ENCODE measurements at regions of chr11 and their contacts with region 1.

Region 1: GRCh38 chr11:62694455-62695167 is 5.3 kb upstream of the LRRN4CL start:
- DNase-seq: peak; percentile 82 to 88 (median 84)
- ATAC-seq: peak; percentile 82
- H3K4me3 ChIP-seq: no peak overlapping the region
- H3K27ac ChIP-seq: no peak overlapping the region
- H3K4me1 ChIP-seq: no peaks in the 10 kb centered on the region
- H3K27me3 ChIP-seq: no peaks in the 10 kb centered on the region
- CTCF ChIP-seq: peak; percentile 59 to 79 (median 74)
- POLR2A ChIP-seq: no peak

Region 2: DNA sequence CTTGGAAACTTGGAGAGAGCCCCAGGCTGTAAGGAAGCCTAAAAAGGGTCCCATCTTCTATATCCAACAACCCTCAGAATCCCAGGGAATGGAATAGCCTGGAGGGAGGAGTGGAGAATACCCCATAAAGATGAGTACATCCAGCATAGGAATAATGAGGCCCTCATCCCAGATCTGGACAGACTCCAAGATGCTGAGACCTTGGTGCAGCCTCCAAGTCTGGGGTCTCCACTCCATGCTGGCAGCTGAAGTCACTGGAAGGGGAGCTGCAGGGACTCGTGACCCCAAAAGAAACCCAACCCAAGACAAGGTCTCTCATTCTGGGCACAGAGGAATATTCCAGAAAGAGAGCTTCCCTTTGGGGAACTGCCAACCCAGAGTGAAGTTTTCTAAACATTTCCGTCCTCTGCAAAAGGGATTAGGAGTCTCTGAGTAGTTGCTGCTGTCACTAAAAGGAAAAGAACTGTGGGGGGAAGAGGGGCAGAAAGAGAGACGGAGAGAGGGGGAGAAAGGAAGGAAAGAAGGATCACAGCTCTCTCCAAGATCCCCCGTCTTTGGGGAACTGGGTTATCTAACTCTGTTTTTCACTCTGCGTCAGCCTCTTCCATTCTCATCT is 275.2 kb before region 1 on chr11:
- intact Hi-C with region 1: loop called (anchors 10 kb)
- DNase-seq: no peak
- ATAC-seq: no peak
- H3K4me3 ChIP-seq: no peak overlapping the region
- H3K27ac ChIP-seq: no peak overlapping the region
- H3K4me1 ChIP-seq: peaks cover under 1% of the 10 kb centered on the region
- H3K27me3 ChIP-seq: no peaks in the 10 kb centered on the region
- CTCF ChIP-seq: no peak
- POLR2A ChIP-seq: no peak

Region 3: GRCh38 chr11:62771144-62772021 is 76.8 kb after region 1 on chr11 and contains the start of gene TAF6L:
- intact Hi-C with region 1: no loop called
- DNase-seq: peak; percentile 98 to 99 (median 98)
- ATAC-seq: peak; percentile 95
- H3K4me3 ChIP-seq: peak within 1 kb of the TSS; percentile 15 to 55
- H3K27ac ChIP-seq: peak within 1 kb of the TSS; percentile 91 to 98 (median 98)
- H3K4me1 ChIP-seq: peaks cover 39% of the 10 kb centered on the region
- H3K27me3 ChIP-seq: no peaks in the 10 kb centered on the region
- CTCF ChIP-seq: no peak
- POLR2A ChIP-seq: peak; percentile 42 to 66 (median 65)
- total RNA-seq, gene TAF6L: 23.9 to 39.9 TPM